ENCODE measurements at regions of chr20 and their contacts with region 1.

Region 1: DNA sequence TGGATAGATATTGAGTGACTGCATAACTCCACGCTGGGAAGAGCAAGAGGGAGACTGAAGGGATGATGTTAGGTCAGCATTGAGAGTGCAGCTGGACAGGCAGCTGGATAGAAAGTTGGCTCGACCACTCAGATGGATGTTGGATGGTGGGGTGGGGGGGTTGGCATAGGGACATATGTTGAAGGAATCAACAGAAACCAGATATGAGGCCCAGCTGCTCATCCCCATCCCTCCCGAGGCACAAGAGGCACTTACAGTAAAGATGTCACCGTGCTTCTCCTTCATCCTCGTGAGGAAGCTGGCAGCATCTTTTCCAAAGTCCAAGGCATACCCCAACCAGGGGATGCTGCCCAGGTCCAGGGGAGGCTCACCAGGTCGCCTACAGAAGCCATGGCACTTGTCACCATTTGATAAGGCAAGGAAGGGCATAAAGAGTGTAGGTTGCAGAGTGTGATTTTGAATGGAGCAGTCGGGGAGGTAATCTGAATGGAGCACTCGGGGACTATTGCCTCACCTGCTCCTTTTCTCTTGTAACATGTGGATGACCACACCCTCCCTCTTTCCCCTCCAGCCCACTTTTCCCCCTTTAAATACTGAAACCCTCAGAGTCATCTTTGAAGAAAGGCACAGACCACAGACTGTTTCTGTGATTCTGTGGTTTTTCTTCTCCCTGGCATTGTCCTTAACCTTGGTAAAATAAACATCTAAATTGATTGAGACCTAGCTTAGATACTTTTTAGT is 18.0 kb downstream of the PTGIS start:
- DNase-seq: no peak
- H3K4me3 ChIP-seq: no peak overlapping the region
- H3K27ac ChIP-seq: peak overlapping the region; percentile 92
- H3K4me1 ChIP-seq: peaks cover 54% of the 10 kb centered on the region
- H3K27me3 ChIP-seq: no peaks in the 10 kb centered on the region
- CTCF ChIP-seq: no peak

Region 2: GRCh38 chr20:49446808-49447207 is 103.2 kb before region 1 on chr20:
- CTCF ChIA-PET with region 1: interaction called, 10 read pairs
- POLR2A ChIA-PET with region 1: no interaction called
- intact Hi-C with region 1: no loop called
- DNase-seq: no peak
- H3K4me3 ChIP-seq: no peak overlapping the region
- H3K27ac ChIP-seq: no peak overlapping the region
- H3K4me1 ChIP-seq: no peaks in the 10 kb centered on the region
- H3K27me3 ChIP-seq: peaks cover 6% of the 10 kb centered on the region; the same call in 1 of the 2 replicates
- CTCF ChIP-seq: no peak

Region 3: GRCh38 chr20:49562311-49563014 is 12.5 kb after region 1 on chr20:
- CTCF ChIA-PET with region 1: interaction called, 4 read pairs
- POLR2A ChIA-PET with region 1: no interaction called
- intact Hi-C with region 1: loop called (anchors 1 kb)
- DNase-seq: peak; percentile 86 to 92
- H3K4me3 ChIP-seq: peak overlapping the region; percentile 22; the same call in 1 of the 2 replicates
- H3K27ac ChIP-seq: peak overlapping the region; percentile 71
- H3K4me1 ChIP-seq: peaks cover 77% of the 10 kb centered on the region
- H3K27me3 ChIP-seq: no peaks in the 10 kb centered on the region
- CTCF ChIP-seq: no peak